ENCODE measurements at regions of chr9 and their contacts with region 1.

Region 1: GRCh38 chr9:105414947-105415661 is 32.7 kb upstream of the FSD1L start:
- DNase-seq: peak; percentile 63
- H3K4me3 ChIP-seq: no peak overlapping the region
- H3K27ac ChIP-seq: no peak overlapping the region
- H3K4me1 ChIP-seq: peaks cover 0 to 20% (median 3%) of the 10 kb centered on the region in 4 donors
- H3K27me3 ChIP-seq: no peaks in the 10 kb centered on the region
- CTCF ChIP-seq: peak; percentile 84 to 94 (median 90)
- EP300 ChIP-seq: no peak
- POLR2A ChIP-seq: no peak

Region 2: DNA sequence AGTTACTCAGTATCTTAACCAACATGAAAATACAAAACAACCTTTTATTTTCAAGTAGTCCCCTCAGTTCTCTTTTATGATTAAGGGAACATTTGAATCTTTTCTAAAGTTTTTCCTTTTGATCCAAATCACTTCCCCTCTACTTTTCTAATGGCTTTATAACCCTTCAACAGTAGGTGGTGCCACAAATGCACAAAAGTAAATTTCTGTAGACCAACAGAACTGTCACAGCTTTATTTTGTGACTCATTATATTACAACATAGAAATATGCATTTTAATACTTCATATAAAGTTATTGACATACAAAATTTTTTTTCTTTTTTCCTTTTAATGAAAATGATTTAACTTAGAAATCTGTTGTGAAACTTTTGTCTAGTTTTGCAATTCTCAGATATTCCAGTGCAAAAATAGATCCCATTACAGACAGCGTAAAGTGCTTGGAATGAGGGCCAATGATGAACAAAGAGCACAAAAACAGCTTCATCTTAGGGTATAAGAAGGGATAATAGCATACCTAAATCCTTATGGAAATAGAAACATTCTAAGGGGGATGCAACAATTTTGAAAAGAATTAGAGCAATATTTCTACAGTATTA is 634.2 kb before region 1 on chr9:
- in situ Hi-C with region 1: loop called in 1 of 4 experiments (anchors 25 kb)
- intact Hi-C with region 1: no loop called
- DNase-seq: no peak
- H3K4me3 ChIP-seq: no peak overlapping the region
- H3K27ac ChIP-seq: no peak overlapping the region
- H3K4me1 ChIP-seq: peaks cover 0 to 2% (median 0%) of the 10 kb centered on the region in 4 donors
- H3K27me3 ChIP-seq: no peaks in the 10 kb centered on the region
- CTCF ChIP-seq: peak in 1 of 5 experiments; percentile 6
- EP300 ChIP-seq: no peak
- POLR2A ChIP-seq: no peak

Region 3: GRCh38 chr9:104863180-104863883 is 551.8 kb before region 1 on chr9:
- in situ Hi-C with region 1: loop called in 2 of 4 experiments (anchors 10 to 25 kb)
- intact Hi-C with region 1: loop called (anchors 10 kb)
- DNase-seq: peak; percentile 32
- H3K4me3 ChIP-seq: no peak overlapping the region
- H3K27ac ChIP-seq: peak overlapping the region; percentile 47 to 55 (median 52)
- H3K4me1 ChIP-seq: peaks cover 9 to 55% (median 26%) of the 10 kb centered on the region in 4 donors
- H3K27me3 ChIP-seq: no peaks in the 10 kb centered on the region
- CTCF ChIP-seq: peak; percentile 57 to 76 (median 64)
- EP300 ChIP-seq: no peak
- POLR2A ChIP-seq: no peak

Region 4: GRCh38 chr9:104907278-104907951 is 507.7 kb before region 1 on chr9:
- in situ Hi-C with region 1: loop called in 1 of 4 experiments (anchors 25 kb)
- intact Hi-C with region 1: no loop called
- DNase-seq: no peak
- H3K4me3 ChIP-seq: no peak overlapping the region
- H3K27ac ChIP-seq: peak overlapping the region; percentile 63 to 81 (median 78)
- H3K4me1 ChIP-seq: peaks cover 31 to 86% (median 53%) of the 10 kb centered on the region in 4 donors
- H3K27me3 ChIP-seq: no peaks in the 10 kb centered on the region
- CTCF ChIP-seq: no peak
- EP300 ChIP-seq: peak; percentile 53
- POLR2A ChIP-seq: no peak

Region 5: GRCh38 chr9:105157130-105157583 is 257.9 kb before region 1 on chr9:
- in situ Hi-C with region 1: loop called (anchors 10 kb)
- intact Hi-C with region 1: no loop called
- DNase-seq: peak; percentile 61
- H3K4me3 ChIP-seq: no peak overlapping the region
- H3K27ac ChIP-seq: peak overlapping the region; percentile 22 to 66 (median 57)
- H3K4me1 ChIP-seq: peaks cover 0 to 14% (median 0%) of the 10 kb centered on the region in 4 donors
- H3K27me3 ChIP-seq: no peaks in the 10 kb centered on the region
- CTCF ChIP-seq: peak; percentile 42 to 66 (median 45)
- EP300 ChIP-seq: peak; percentile 56
- POLR2A ChIP-seq: no peak

Region 6: GRCh38 chr9:105168870-105169319 is 246.2 kb before region 1 on chr9:
- in situ Hi-C with region 1: loop called in 2 of 4 experiments (anchors 10 kb)
- intact Hi-C with region 1: no loop called
- DNase-seq: no peak
- H3K4me3 ChIP-seq: no peak overlapping the region
- H3K27ac ChIP-seq: no peak overlapping the region
- H3K4me1 ChIP-seq: no peaks in the 10 kb centered on the region
- H3K27me3 ChIP-seq: no peaks in the 10 kb centered on the region
- CTCF ChIP-seq: no peak
- EP300 ChIP-seq: no peak
- POLR2A ChIP-seq: no peak

Measured in transverse colon (tissue), 4 donors.